ENCODE measurements at regions of chr5 and their contacts with region 1.

Region 1: GRCh38 chr5:57179262-57180200 is 5.7 kb downstream of the GPBP1 start:
- DNase-seq: no peak
- H3K4me3 ChIP-seq: no peak overlapping the region; the same call in 1 of the 2 replicates
- H3K27me3 ChIP-seq: no peaks in the 10 kb centered on the region
- CTCF ChIP-seq: no peak

Region 2: DNA sequence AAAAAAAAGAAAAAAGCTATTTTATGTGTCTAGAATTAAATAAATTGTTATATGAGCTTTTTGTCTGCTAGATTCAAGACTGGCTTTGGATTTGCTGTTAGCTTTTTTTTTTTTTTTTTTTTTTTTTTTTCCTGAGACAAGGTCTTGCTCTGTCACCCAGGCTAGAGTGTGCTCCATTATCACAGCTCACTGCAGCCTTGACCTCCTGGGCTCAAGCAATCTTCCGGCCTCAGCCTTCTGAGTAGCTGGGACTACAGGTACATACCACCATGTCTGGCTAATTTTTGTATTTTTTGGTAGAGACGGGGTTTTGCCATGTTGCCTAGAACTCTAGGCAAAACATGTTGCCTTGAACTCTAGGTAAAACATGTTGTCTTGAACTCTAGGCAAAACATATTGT is 11.1 kb after region 1 on chr5:
- CTCF ChIA-PET with region 1: no interaction called
- POLR2A ChIA-PET with region 1: interaction called, 23 read pairs
- DNase-seq: no peak
- H3K4me3 ChIP-seq: no peak overlapping the region
- H3K27me3 ChIP-seq: no peaks in the 10 kb centered on the region
- CTCF ChIP-seq: no peak